Activated CD8-positive, alpha-beta T cell treated with anti-CD3 and anti-CD28 coated beads for 36 hours (primary cell): ENCODE measurements at regions of chr7 and their contacts with region 1.

Region 1: GRCh38 chr7:149005241-149006050 is 22.9 kb downstream of the PDIA4 start:
- DNase-seq: peak; percentile 92
- ATAC-seq: peak; percentile 94
- H3K4me3 Mint-ChIP-seq: no peak overlapping the region
- H3K27ac Mint-ChIP-seq: peak overlapping the region; percentile 46
- H3K4me1 Mint-ChIP-seq: peaks cover 11% of the 10 kb centered on the region
- H3K27me3 Mint-ChIP-seq: no peaks in the 10 kb centered on the region
- CTCF ChIP-seq: peak; percentile 79

Region 2: DNA sequence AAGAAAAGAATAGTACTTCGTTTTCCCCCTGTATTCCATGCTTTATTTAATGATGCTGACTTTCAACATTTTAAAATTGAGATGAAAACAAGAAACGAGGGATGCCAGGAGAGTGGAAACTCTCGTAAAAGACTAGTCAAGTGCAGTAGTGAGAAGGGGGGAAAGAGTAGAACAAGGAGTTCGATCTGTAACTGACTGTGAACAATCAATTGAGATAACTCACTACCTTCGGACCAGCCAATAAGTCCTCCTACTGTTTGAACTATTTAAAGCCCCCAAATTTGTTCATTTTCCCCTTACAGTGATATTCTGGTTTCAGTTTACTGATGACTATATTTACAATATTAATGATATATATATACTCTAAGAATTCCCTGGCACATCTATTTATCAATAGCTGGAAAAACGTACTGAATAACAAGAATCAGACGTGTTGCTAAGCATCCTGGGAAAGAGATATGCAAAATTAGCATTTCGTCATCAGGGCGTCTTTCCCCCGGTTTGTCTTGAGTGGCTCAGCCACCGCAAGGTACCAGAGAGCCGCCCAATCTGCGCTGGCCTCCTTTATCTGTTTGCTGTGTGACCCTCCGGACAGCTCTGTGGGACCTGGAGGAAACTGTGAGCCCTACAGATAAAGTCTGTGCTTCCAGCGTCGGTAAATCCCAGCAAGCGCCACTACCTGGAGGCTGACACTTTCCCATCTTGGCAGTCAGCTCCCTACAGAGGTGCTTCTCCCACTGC is 18.3 kb before region 1 on chr7:
- CTCF ChIA-PET with region 1: interaction called, 18 read pairs
- POLR2A ChIA-PET with region 1: interaction called, 7 read pairs
- intact Hi-C with region 1: no loop called
- DNase-seq: peak; percentile 90
- ATAC-seq: peak; percentile 81
- H3K4me3 Mint-ChIP-seq: peak overlapping the region; percentile 90
- H3K27ac Mint-ChIP-seq: peak overlapping the region; percentile 95
- H3K4me1 Mint-ChIP-seq: peaks cover 44% of the 10 kb centered on the region
- H3K27me3 Mint-ChIP-seq: peaks cover 4% of the 10 kb centered on the region
- CTCF ChIP-seq: no peak

Region 3: GRCh38 chr7:149028346-149029109 is 23.1 kb after region 1 on chr7 and contains the start of gene PDIA4:
- CTCF ChIA-PET with region 1: interaction called, 18 read pairs
- POLR2A ChIA-PET with region 1: interaction called, 5 read pairs
- intact Hi-C with region 1: no loop called
- DNase-seq: peak; percentile 100
- ATAC-seq: peak; percentile 90
- H3K4me3 Mint-ChIP-seq: peak within 1 kb of the TSS; percentile 93
- H3K27ac Mint-ChIP-seq: peak within 1 kb of the TSS; percentile 93
- H3K4me1 Mint-ChIP-seq: peaks cover 31% of the 10 kb centered on the region
- H3K27me3 Mint-ChIP-seq: no peaks in the 10 kb centered on the region
- CTCF ChIP-seq: no peak
- total RNA-seq, gene PDIA4: 72.6 to 75.7 TPM

Region 4: DNA sequence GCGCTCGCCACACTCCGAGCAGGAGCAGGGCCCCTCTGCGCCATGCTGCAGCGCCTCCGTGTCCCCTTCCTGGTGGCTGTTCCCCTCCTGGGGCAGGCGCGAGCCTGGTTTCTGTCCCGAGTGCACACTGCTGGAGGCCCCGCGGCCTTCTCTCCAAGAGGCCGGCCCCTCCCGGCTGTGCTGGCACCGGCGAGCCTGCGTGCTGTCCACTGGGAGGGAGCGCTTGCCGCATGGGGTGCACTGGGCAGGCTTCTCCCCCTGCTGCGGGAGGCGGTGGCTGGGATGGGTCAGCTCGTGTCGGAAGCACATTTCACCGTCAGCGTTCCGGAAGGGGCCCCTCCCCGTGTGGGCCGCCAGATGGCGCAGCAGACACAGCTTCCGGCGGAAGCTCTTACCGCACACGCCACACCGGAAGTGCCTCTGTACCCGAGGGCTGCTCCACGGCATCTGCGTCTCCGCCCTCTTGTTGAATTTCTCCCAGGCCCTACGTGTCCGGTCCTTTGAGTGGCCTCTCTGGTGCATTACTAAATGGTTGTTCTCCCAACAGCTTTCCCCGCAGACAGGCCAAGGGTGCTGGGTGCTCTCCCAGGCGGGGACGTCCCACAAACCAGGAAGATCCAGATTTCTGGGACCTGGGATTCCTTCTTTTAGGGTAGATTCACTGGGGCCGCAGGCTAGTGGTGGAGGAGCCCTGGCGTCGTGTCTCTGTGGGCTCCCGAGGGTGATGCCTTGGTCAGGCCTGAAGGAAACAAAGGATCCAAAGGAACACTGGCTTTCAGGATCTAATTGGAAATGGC is 66.4 kb after region 1 on chr7:
- CTCF ChIA-PET with region 1: interaction called, 60 read pairs
- POLR2A ChIA-PET with region 1: no interaction called
- intact Hi-C with region 1: loop called (anchors 5 kb)
- DNase-seq: peak; percentile 63
- ATAC-seq: peak; percentile 88
- H3K4me3 Mint-ChIP-seq: peak overlapping the region; percentile 52
- H3K27ac Mint-ChIP-seq: peak overlapping the region; percentile 75
- H3K4me1 Mint-ChIP-seq: peaks cover 2% of the 10 kb centered on the region
- H3K27me3 Mint-ChIP-seq: no peaks in the 10 kb centered on the region
- CTCF ChIP-seq: no peak

Region 5: DNA sequence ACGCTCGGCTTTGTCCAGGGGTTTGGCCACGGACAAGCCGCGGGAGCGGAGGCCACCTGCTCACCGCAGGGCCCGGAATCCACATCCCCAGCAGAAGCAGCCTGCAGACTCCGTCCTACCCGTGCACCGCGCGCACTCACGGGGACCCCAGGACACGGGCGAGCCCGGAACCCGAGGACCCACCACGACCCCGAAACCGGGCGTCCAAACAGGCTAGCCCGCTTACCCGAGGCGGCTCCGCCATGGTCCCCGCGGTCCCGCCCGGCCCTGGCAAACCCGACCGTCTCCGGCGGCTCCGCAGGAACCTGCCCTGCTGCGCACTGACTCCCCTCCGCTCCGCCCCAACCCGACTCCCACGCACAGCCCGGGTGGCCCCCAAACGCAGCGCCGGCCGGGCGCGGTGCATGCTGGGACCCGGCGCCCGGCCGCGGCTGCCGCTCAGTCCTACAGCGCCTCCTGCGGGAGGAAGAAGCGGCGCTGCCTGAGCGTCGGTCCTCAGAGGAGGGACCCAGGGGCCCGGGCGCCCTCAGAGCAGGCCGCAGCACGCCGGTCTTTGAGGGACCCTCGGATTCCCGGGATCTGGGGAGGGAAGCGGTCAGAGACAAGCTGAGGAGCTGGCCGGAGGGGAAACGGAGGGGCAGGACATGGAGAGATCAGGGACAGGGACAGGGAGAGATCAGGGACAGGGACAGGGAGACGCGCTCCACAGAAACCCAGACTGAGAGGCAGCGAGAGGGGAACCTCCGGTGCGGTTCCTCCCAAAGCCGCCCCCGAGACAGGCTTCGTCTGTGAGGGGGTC is 85.2 kb after region 1 on chr7 and contains the start of gene ZNF786:
- CTCF ChIA-PET with region 1: interaction called, 8 read pairs
- POLR2A ChIA-PET with region 1: interaction called, 3 read pairs
- intact Hi-C with region 1: loop called (anchors 2 kb)
- DNase-seq: peak; percentile 95
- ATAC-seq: peak; percentile 87
- H3K4me3 Mint-ChIP-seq: peak within 1 kb of the TSS; percentile 82
- H3K27ac Mint-ChIP-seq: peak within 1 kb of the TSS; percentile 99
- H3K4me1 Mint-ChIP-seq: peaks cover 25% of the 10 kb centered on the region
- H3K27me3 Mint-ChIP-seq: no peaks in the 10 kb centered on the region
- CTCF ChIP-seq: peak; percentile 81
- total RNA-seq, gene ZNF786: 4.0 to 4.3 TPM

Region 6: GRCh38 chr7:149147072-149147751 is 141.8 kb after region 1 on chr7 and contains the start of gene ZNF398:
- CTCF ChIA-PET with region 1: interaction called, 10 read pairs
- POLR2A ChIA-PET with region 1: no interaction called
- intact Hi-C with region 1: no loop called
- DNase-seq: peak; percentile 75
- ATAC-seq: peak; percentile 86
- H3K4me3 Mint-ChIP-seq: peak within 1 kb of the TSS; percentile 97
- H3K27ac Mint-ChIP-seq: peak within 1 kb of the TSS; percentile 95
- H3K4me1 Mint-ChIP-seq: peaks cover 28% of the 10 kb centered on the region
- H3K27me3 Mint-ChIP-seq: no peaks in the 10 kb centered on the region
- CTCF ChIP-seq: peak; percentile 87
- total RNA-seq, gene ZNF398: 7.2 to 8.7 TPM